H1 (cell line): ENCODE measurements at regions of chr13 and their contacts with region 1.

Region 1: DNA sequence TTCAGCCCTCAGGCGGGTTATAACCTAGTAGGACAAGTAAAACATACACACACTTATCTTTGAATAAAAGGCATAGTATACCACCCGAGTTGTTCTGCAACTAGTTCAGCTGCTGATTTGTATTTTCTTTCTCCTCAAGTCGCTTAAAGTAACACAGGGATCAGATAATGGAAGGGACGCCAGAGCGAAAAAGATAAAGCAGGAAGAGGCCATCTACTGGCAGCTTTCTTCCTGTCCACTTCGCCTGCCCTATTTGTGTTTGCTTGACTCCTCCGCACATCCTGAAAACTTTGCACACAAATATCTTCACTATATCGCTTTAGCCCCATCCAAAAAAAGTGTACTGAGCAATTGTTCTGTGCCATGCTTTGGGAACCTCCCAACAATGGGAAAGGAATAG is 238.0 kb upstream of the SOX21 start:
- DNase-seq: no peak
- H3K4me3 ChIP-seq: no peak overlapping the region
- H3K27ac ChIP-seq: no peak overlapping the region
- H3K4me1 ChIP-seq: peaks cover 0 to 22% (median 7%) of the 10 kb centered on the region in 4 experiments; a peak in 4 of 7 replicates
- H3K27me3 ChIP-seq: no peaks in the 10 kb centered on the region
- CTCF ChIP-seq: peak; percentile 38 to 64 (median 53)
- EP300 ChIP-seq: no peak
- POLR2A ChIP-seq: no peak
- RAD21 ChIP-seq: peak; percentile 69 to 78

Region 2: DNA sequence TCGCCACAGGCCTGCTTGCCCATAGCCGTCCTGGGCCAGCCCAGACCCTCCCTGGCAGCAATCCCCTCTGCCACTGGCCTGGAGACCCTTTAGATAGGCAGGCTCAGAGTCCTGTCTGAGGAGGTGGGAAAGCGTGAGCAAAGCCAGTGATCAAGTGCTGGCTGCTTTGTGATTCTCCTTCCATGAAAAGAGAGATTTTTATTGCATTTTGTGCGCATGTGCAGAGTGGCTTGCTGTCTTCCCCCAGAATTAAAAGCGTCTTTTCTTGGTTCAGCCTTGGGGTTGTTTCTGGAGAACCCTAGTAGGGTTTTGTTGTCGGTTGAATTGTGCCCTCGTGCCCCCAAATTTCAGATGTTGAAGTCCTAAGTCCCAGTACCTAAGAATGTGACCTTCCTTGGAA is 425.9 kb before region 1 on chr13:
- CTCF ChIA-PET with region 1: no interaction called
- POLR2A ChIA-PET with region 1: no interaction called
- DNase-seq: no peak
- H3K4me3 ChIP-seq: no peak overlapping the region
- H3K27ac ChIP-seq: no peak overlapping the region
- H3K4me1 ChIP-seq: no peaks in the 10 kb centered on the region
- H3K27me3 ChIP-seq: no peaks in the 10 kb centered on the region
- CTCF ChIP-seq: no peak
- EP300 ChIP-seq: no peak
- POLR2A ChIP-seq: no peak
- RAD21 ChIP-seq: no peak

Region 3: DNA sequence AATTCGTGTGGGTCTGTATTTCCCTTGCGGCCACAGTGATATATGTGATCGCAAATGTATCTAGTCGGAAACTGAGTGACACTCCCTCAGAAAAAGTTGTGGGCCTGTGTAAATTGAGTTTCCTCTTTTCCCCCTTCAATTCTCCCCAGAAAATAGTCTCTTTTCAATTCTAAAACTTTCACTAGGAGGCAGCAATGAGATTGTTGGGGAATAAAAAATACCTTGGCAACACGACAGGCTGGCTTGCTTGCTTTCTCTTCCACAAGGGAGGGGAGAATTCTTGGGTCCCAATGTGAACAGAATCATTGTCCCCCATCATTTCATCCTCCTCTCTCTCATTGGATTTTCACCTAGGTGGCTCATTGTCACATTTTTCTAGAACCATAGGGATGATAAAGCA is 234.3 kb before region 1 on chr13:
- CTCF ChIA-PET with region 1: interaction called, 16 read pairs
- POLR2A ChIA-PET with region 1: interaction called, 3 read pairs
- DNase-seq: no peak
- H3K4me3 ChIP-seq: no peak overlapping the region
- H3K27ac ChIP-seq: no peak overlapping the region
- H3K4me1 ChIP-seq: peaks cover 0 to 10% (median 4%) of the 10 kb centered on the region in 4 experiments; a peak in 5 of 7 replicates
- H3K27me3 ChIP-seq: peaks cover 0 to 33% (median 25%) of the 10 kb centered on the region in 4 experiments; a peak in 6 of 7 replicates
- CTCF ChIP-seq: peak in 2 of 3 experiments; percentile 24 to 34; a peak in 2 of 4 replicates
- EP300 ChIP-seq: no peak
- POLR2A ChIP-seq: no peak
- RAD21 ChIP-seq: peak; percentile 62 to 76

Region 4: GRCh38 chr13:94933230-94933751 is 17.0 kb before region 1 on chr13:
- CTCF ChIA-PET with region 1: interaction called, 18 read pairs
- POLR2A ChIA-PET with region 1: no interaction called
- DNase-seq: no peak
- H3K4me3 ChIP-seq: no peak overlapping the region
- H3K27ac ChIP-seq: no peak overlapping the region
- H3K4me1 ChIP-seq: no peaks in the 10 kb centered on the region
- H3K27me3 ChIP-seq: no peaks in the 10 kb centered on the region
- CTCF ChIP-seq: no peak
- EP300 ChIP-seq: no peak
- POLR2A ChIP-seq: no peak
- RAD21 ChIP-seq: no peak